ENCODE measurements at regions of chr11 and their contacts with region 1.

Region 1: GRCh38 chr11:4636962-4637661 is at the start of gene OR51D1:
- DNase-seq: peak; percentile 85
- total RNA-seq, gene OR51D1: not detected

Region 2: GRCh38 chr11:5004424-5005274 is 367.5 kb after region 1 on chr11:
- intact Hi-C with region 1: loop called in 1 of 2 experiments (anchors 10 kb)
- DNase-seq: no peak